Caco-2 (cell line): ENCODE measurements at regions of chr9 and their contacts with region 1.

Region 1: DNA sequence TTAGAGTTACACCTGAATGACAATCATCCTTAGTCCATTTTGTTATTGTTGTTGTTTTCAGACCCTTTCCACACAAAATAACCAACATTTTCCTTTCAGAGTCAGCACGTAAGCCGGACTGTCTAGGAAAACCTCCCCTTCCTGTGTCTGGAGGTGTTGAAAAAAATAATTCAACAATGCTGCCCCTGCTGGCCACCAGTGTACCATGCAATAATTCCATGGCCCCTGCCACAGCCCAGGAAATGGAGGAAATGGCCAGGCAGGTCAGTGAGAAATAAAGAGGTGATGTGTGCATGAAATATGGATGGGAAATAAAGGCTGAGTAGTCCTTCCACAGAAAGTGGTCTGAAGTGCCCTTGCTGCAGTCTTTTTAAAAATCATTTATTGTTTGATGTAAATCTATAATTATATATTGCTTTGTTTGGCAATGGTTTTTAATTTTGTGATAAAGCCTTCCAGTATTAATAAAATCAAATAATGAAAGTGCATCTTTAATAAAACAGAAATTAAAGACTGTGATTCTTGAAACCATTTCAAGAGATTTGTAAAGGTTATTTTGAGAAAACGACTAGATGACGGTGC is 152.8 kb upstream of the PAPPA start:
- DNase-seq: peak; percentile 35 to 36
- H3K4me3 ChIP-seq: no peak overlapping the region
- H3K4me3 Mint-ChIP-seq: no peak overlapping the region
- H3K27ac Mint-ChIP-seq: no peak overlapping the region
- H3K4me1 ChIP-seq: no peaks in the 10 kb centered on the region
- H3K4me1 Mint-ChIP-seq: no peaks in the 10 kb centered on the region
- H3K27me3 ChIP-seq: no peaks in the 10 kb centered on the region
- H3K27me3 Mint-ChIP-seq: peaks cover 4% of the 10 kb centered on the region
- CTCF ChIP-seq: peak; percentile 48 to 60

Region 2: GRCh38 chr9:115883457-115884329 is 117.1 kb before region 1 on chr9:
- CTCF ChIA-PET with region 1: no interaction called
- POLR2A ChIA-PET with region 1: no interaction called
- intact Hi-C with region 1: loop called (anchors 5 kb)
- DNase-seq: peak; percentile 37 to 42
- H3K4me3 ChIP-seq: no peak overlapping the region
- H3K4me3 Mint-ChIP-seq: no peak overlapping the region
- H3K27ac Mint-ChIP-seq: no peak overlapping the region
- H3K4me1 ChIP-seq: no peaks in the 10 kb centered on the region
- H3K4me1 Mint-ChIP-seq: no peaks in the 10 kb centered on the region
- H3K27me3 ChIP-seq: no peaks in the 10 kb centered on the region
- H3K27me3 Mint-ChIP-seq: peaks cover 12% of the 10 kb centered on the region
- CTCF ChIP-seq: peak; percentile 63 to 67